Dorsolateral prefrontal cortex (tissue), 120 donors: ENCODE measurements at regions of chr20 and their contacts with region 1.

Region 1: GRCh38 chr20:18566892-18567742 is at the start of gene SMIM26:
- DNase-seq: peak; percentile 82 to 93 (median 90)
- H3K4me3 ChIP-seq: peak within 1 kb of the TSS; percentile 56 to 98 (median 84)
- H3K27ac ChIP-seq: peak within 1 kb of the TSS in 58 of 59 donors; percentile 43 to 95 (median 85)
- H3K27me3 ChIP-seq: no peaks in the 10 kb centered on the region
- CTCF ChIP-seq: peak in 26 of 56 donors; percentile 12 to 57 (median 32)
- total RNA-seq, gene SMIM26: 26.9 to 78.9 (median 54.7) TPM

Region 2: GRCh38 chr20:18314786-18315406 is 252.2 kb before region 1 on chr20:
- intact Hi-C with region 1: no loop called
- DNase-seq: no peak
- H3K4me3 ChIP-seq: no peak overlapping the region
- H3K27ac ChIP-seq: no peak overlapping the region
- H3K27me3 ChIP-seq: no peaks in the 10 kb centered on the region
- CTCF ChIP-seq: no peak

Region 3: DNA sequence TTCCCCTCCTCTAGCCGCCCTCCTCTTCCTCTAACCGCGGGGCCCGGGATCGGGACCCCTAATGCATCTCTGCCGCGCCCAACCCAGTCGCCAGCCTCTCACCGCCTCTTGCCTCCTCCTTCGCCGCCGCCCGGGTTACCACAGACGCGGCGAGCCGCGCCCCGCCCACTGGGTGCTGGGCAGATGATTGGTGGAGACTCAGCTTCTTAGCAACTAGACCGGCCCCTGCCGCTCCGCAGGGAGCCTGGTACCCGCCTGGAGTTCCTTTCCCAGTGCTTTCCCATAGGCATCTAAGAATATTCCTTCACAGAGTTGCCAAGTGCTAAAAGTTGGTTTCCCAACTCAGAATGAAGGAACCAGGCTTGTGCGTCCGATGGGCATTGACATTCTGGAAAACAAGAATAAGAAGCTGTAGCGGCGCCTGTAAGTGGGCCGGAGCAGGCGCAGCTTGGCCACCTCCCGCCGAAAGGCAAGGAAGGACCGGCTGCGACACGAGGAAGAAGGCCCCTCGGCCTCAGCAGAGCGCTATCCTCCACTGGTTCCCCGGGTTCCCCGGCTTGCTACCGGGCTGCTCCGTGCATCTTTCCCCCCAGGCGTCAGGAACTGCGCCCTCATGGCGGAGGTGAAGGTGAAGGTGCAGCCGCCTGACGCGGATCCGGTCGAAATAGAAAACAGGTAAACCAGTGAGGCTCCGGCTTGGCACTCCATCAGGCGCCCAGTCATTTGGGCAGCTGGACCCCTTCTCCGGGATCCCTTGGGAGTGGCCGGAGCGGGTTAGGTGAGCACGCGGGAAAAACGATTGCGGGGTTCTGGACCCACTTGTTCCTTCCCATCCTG is 100.0 kb before region 1 on chr20 and contains the starts of genes DZANK1 and POLR3F:
- intact Hi-C with region 1: loop called in 1 of 2 experiments (anchors 5 kb)
- DNase-seq: peak; percentile 96 to 99 (median 98)
- H3K4me3 ChIP-seq: peak within 1 kb of the TSS; percentile 72 to 100 (median 95)
- H3K27ac ChIP-seq: peak within 1 kb of the TSS; percentile 76 to 98 (median 93)
- H3K27me3 ChIP-seq: no peaks in the 10 kb centered on the region
- CTCF ChIP-seq: peak in 21 of 56 donors; percentile 3 to 49 (median 16)
- total RNA-seq, gene DZANK1: 5.0 to 14.4 (median 9.3) TPM
- total RNA-seq, gene POLR3F: 6.7 to 24.6 (median 16.5) TPM

Region 4: DNA sequence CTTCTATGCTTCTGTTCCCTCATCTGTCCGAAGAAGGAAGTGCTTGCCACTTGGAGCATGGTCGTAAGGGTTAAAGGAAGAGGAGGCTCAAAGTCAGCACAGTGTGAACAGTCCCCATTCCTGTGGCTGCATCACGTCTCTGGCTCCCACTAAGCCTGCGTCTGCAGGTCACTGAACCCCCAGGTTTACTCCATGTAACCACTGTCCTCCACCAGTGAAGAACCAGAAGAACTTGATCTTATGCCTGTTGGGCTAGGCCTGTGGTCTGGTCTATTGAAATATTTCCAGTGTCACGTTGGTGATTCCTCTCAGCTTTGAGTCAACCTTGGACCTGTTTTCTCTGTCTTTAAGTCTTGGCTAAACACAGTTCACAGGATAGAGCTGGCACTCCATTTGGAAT is 200.6 kb after region 1 on chr20:
- intact Hi-C with region 1: no loop called
- DNase-seq: no peak
- H3K4me3 ChIP-seq: no peak overlapping the region
- H3K27ac ChIP-seq: no peak overlapping the region
- H3K27me3 ChIP-seq: no peaks in the 10 kb centered on the region
- CTCF ChIP-seq: no peak

Region 5: DNA sequence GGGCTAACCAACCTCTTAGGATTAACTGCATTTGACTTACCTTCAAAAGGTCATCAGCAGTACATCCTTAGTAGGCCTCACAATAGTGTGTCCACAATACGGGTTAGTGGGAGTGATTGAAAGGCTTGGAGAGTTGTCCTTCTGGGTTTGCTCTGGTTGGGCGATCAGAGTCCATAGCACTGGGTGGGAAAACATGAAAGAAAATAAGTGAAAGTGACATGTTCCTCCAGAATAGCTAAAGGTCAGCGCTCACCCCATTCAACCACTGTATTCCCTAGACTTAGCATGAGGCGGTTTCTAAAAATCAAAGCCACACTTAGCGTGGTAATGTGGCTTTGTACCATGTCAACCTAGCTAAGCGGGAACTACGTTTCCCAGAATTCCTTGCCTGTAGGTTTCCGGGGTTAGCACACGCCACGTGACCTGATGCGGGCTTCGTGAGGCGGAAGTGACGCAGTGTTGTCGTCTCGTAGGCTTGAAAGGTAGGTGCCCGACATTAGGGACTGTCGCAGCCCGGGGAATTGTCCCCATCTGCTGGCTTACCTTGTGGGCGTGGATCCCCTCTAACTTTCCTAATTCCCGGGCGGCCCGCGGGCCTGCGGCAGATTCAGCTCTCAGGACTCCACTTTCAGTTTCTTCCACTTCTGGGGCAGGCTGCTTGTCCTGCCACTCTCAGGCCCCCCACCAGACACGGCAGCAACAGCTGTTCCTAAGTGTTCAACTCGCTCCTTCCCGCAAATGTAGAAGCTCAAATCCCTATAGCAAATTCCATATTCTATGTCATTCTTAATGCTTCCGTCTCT is 226.7 kb after region 1 on chr20:
- intact Hi-C with region 1: loop called in 1 of 2 experiments (anchors 5 kb)
- DNase-seq: peak; percentile 87 to 96 (median 93)
- H3K4me3 ChIP-seq: peak overlapping the region; percentile 57 to 99 (median 81)
- H3K27ac ChIP-seq: peak overlapping the region; percentile 17 to 96 (median 88)
- H3K27me3 ChIP-seq: peaks cover 0 to 4% (median 0%) of the 10 kb centered on the region in 45 donors
- CTCF ChIP-seq: peak in 49 of 56 donors; percentile 7 to 66 (median 42)